Natural killer cell (primary cell): ENCODE measurements at regions of chr5 and their contacts with region 1.

Region 1: GRCh38 chr5:172144291-172144815 is 43.7 kb downstream of the STK10 start:
- DNase-seq: no peak
- ATAC-seq: peak in 2 of 3 donors; percentile 26 to 31
- H3K4me3 ChIP-seq: no peak overlapping the region
- H3K4me3 Mint-ChIP-seq: peak overlapping the region; percentile 57
- H3K27ac ChIP-seq: peak overlapping the region; percentile 28
- H3K27ac Mint-ChIP-seq: peak overlapping the region; percentile 97 to 98
- H3K4me1 ChIP-seq: peaks cover 81% of the 10 kb centered on the region
- H3K4me1 Mint-ChIP-seq: peaks cover 85 to 93% of the 10 kb centered on the region in 2 donors
- H3K27me3 ChIP-seq: no peaks in the 10 kb centered on the region
- H3K27me3 Mint-ChIP-seq: no peaks in the 10 kb centered on the region
- CTCF ChIP-seq: no peak

Region 2: DNA sequence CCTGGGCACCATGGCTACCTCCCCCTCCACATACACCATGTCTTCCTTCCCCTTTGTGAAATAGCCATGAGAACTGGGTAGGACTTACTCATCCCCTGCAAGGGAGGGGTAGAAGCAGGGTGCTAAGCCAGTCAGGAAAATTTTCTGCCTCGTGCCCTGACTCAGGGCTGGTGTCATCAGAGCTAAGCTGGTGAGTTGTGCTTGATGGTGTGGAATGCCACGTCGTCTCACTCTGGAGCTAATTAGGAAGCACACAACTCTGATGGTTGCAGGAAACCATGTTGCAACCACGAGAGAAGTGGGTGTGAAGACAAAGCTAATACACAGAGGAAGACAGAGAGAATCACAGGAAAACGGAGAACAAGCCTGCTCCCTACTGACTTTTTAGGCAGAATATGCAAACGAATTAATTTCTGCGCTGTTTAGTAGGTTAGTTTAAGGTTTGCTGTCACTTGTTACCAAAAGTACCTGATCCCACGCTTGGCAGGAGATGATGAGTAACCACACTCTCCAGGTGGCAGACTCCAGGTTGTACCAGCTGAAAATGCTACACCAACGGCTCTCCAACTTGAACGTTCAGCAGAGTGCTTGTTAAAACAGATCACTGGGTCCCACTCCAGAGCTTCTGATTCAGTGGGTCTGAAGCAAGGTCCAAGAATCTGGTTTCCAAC is 10.9 kb before region 1 on chr5:
- intact Hi-C with region 1: loop called (anchors 2 kb)
- DNase-seq: peak; percentile 53 to 61
- ATAC-seq: peak; percentile 79 to 91 (median 86)
- H3K4me3 ChIP-seq: no peak overlapping the region
- H3K4me3 Mint-ChIP-seq: peak overlapping the region; percentile 79
- H3K27ac ChIP-seq: peak overlapping the region; percentile 58
- H3K27ac Mint-ChIP-seq: peak overlapping the region; percentile 87 to 90
- H3K4me1 ChIP-seq: peaks cover 64% of the 10 kb centered on the region
- H3K4me1 Mint-ChIP-seq: peaks cover 80 to 81% of the 10 kb centered on the region in 2 donors
- H3K27me3 ChIP-seq: no peaks in the 10 kb centered on the region
- H3K27me3 Mint-ChIP-seq: no peaks in the 10 kb centered on the region
- CTCF ChIP-seq: no peak

Region 3: DNA sequence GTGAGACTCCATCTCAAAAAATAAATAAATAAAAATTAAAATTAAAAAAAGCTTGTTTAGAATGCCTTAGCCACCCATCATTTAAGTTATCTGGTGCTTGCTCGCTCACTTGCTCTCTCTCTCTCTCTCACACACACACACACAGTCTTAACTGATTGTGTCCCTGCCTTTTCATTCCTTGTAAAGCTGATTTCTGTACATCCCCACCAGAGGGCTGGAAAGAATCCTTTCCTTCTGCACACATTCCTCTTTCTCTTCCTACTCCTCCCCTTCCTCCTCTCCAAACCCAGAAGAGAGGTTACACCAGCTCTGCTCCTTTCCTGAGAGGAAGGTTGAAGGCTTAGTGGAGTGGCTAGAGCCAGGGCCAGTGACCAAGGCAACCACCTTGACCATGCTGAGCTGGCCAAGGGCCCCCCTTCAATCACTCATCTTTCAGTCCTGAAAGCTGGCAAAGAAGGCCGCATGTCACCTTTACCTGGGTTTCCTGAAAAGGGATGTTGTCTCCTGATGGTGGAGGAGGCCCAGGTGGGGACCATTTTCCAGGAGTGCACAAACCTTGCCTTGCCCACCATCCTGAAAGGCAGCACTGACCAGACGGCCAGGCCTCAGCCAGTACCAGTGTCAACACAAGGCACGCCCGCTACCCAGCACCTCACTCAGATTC is 18.1 kb after region 1 on chr5:
- intact Hi-C with region 1: loop called (anchors 2 kb)
- DNase-seq: no peak
- ATAC-seq: no peak
- H3K4me3 ChIP-seq: no peak overlapping the region
- H3K4me3 Mint-ChIP-seq: peak overlapping the region; percentile 21
- H3K27ac ChIP-seq: peak overlapping the region; percentile 0
- H3K27ac Mint-ChIP-seq: peak overlapping the region; percentile 82 to 98
- H3K4me1 ChIP-seq: peaks cover 84% of the 10 kb centered on the region
- H3K4me1 Mint-ChIP-seq: peaks cover 64 to 86% of the 10 kb centered on the region in 2 donors
- H3K27me3 ChIP-seq: no peaks in the 10 kb centered on the region
- H3K27me3 Mint-ChIP-seq: no peaks in the 10 kb centered on the region
- CTCF ChIP-seq: no peak